ENCODE measurements at regions of chr9 and their contacts with region 1.

Region 1: DNA sequence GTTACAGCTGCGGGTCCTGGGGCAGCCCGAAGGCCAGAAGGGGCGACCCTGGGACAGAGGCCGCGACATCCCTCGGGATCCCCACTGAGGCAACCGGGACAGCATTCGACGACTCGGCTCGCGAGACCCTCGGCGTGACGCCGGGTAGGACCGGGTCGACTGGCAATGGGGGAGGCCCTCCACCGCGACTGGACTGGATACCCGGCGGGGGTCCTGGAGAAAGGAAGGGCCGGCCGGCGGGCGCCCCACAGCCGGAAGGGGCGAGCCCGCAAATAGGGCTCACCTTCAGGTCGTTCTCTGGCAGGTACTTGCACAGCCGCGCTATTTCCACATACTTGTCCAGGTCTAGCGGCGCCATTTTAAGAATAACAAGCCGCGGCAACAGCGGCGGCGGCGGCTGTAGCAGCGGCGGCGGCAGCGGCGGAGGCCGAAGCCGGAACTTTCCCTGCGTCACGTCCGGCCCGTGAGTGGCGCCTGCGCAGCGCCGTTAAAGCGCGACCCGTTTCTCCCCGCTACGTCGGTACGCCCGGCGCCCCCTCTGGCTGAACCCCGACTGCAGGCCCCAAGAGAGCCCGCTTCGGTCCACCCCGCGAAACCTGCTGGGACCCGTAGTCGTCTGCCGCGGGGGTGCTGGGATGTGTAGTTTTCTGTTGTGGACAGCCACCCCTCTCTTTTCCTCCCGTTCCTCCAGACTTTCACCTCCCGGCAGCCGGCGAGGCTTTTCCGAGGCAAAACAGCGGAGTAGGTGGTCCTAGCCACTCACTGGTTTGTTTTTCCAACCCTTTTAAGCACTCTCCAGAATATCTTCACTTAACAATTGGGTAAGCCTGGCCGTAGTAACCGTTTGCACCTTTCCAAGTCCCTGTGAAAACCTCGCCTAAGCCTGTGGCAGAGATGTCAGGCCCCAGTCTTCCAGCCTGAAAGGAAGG is at the start of gene PPP6C:
- DNase-seq: peak; percentile 95 to 98
- ATAC-seq: peak; percentile 96 to 99 (median 96)
- H3K4me3 ChIP-seq: peak within 1 kb of the TSS; percentile 99
- H3K4me3 Mint-ChIP-seq: peak within 1 kb of the TSS; percentile 94
- H3K27ac ChIP-seq: peak within 1 kb of the TSS; percentile 98
- H3K27ac Mint-ChIP-seq: peak within 1 kb of the TSS; percentile 91
- H3K4me1 ChIP-seq: peaks cover 28% of the 10 kb centered on the region
- H3K4me1 Mint-ChIP-seq: peaks cover 15 to 18% of the 10 kb centered on the region in 2 donors
- H3K27me3 ChIP-seq: no peaks in the 10 kb centered on the region
- H3K27me3 Mint-ChIP-seq: no peaks in the 10 kb centered on the region
- CTCF ChIP-seq: peak; percentile 62
- total RNA-seq, gene PPP6C: 31.1 to 37.4 (median 34.8) TPM

Region 2: DNA sequence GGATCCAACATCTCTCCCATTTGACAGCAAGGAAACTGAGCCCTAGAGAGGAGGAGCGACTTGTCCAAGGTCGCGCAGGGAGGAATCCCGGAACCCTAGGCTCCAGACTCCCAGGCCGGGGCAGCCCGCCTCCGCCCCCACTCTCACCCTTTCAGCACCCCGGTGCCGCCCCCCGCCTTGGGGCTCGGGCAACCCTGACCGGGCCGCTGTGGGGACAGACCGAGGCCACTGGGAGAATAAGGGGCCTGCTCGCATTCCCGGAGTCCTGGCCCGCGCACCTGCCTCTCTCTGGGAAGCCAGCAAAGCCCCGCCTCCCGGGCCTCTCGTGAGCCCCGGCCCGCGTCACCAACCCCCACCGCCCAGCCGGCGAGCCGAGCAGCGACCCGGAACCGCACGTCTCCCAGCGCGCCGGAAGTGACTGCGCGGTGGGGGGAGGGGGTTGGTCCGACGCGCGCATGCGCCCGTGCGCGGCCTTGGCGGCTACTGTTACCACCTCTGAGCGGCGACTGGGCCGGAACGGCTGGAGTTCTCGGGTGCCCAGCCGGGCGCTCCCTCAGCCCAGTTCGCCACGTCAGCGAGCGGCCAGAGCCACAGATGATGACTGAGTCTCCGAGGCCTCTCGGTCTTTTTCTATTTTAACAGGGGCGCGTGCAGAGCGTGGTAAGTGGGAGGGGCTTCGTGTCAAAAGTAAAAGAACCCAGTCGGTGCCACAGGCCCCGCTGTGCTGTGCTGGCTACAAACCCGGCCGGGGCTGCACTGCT is 248.8 kb before region 1 on chr9 and contains the start of gene GOLGA1:
- intact Hi-C with region 1: loop called (anchors 2 kb)
- DNase-seq: peak; percentile 92 to 97
- ATAC-seq: peak; percentile 85 to 97 (median 88)
- H3K4me3 ChIP-seq: peak within 1 kb of the TSS; percentile 98
- H3K4me3 Mint-ChIP-seq: peak within 1 kb of the TSS; percentile 97
- H3K27ac ChIP-seq: peak within 1 kb of the TSS; percentile 98
- H3K27ac Mint-ChIP-seq: peak within 1 kb of the TSS; percentile 91 to 95
- H3K4me1 ChIP-seq: peaks cover 14% of the 10 kb centered on the region
- H3K4me1 Mint-ChIP-seq: peaks cover 22 to 24% of the 10 kb centered on the region in 2 donors
- H3K27me3 ChIP-seq: no peaks in the 10 kb centered on the region
- H3K27me3 Mint-ChIP-seq: no peaks in the 10 kb centered on the region
- CTCF ChIP-seq: no peak
- total RNA-seq, gene GOLGA1: 21.5 to 32.4 (median 27.0) TPM

Region 3: DNA sequence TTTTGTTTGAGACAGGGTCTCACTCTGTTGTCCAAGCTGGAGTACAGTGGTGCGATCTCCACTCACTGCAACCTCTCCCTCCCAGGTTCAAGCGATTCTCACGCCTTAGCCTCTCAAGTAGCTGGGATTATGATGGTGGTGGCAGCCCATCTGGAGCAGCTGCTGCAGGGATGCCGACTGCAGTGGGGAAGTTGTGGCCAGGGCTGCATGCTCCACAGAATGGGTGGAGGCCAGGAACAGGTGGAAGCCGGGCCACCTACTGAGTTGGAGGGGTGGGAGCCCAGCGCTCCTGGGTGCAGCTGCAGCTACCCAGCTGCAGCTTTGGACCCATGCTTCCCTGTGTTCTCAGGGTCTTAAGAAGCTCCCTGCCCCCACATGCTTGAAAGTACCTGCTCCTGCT is 146.0 kb before region 1 on chr9:
- intact Hi-C with region 1: no loop called
- DNase-seq: no peak
- ATAC-seq: no peak
- H3K4me3 ChIP-seq: no peak overlapping the region
- H3K4me3 Mint-ChIP-seq: no peak overlapping the region
- H3K27ac ChIP-seq: no peak overlapping the region
- H3K27ac Mint-ChIP-seq: no peak overlapping the region
- H3K4me1 ChIP-seq: no peaks in the 10 kb centered on the region
- H3K4me1 Mint-ChIP-seq: no peaks in the 10 kb centered on the region
- H3K27me3 ChIP-seq: no peaks in the 10 kb centered on the region
- H3K27me3 Mint-ChIP-seq: no peaks in the 10 kb centered on the region
- CTCF ChIP-seq: no peak

Region 4: DNA sequence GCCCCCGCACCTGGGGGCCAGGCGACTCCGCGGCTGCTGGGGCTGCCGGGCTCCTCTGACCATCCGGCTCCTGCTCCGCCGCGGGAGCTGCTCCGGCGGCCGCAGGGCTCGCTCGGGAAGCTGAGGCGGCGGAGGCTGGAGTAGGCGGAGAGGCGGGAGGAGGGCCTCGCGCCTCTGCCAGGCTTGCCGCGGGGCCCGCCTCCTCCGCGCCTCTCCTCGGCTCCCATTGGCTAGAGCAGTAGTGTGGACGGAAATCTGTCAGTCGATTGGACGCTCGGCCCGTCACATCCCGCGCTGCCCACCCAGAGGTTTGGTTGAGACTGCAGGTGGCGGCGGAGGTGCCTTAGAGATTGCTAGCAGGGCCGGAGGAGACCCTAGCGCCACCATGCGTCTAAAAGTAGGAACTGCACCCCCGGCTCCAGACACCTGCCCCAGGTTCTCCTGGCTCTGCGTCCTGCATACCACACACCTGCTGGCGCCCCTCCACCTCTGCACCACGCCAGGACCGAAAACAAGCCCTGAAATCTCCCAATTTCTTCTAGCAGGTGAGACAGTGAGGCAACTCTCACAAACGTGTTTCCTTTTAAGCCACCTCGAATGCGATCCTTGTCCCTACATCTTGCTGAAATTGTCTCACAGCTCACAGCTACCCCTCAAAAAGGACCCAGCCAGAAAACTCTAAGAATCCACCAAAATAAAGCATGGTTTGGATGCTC is 46.1 kb before region 1 on chr9 and contains the start of gene SCAI:
- intact Hi-C with region 1: loop called (anchors 5 kb)
- DNase-seq: peak; percentile 95 to 99
- ATAC-seq: peak; percentile 98 to 100 (median 99)
- H3K4me3 ChIP-seq: peak within 1 kb of the TSS; percentile 33
- H3K4me3 Mint-ChIP-seq: peak within 1 kb of the TSS; percentile 98
- H3K27ac ChIP-seq: no peak within 1 kb of the TSS
- H3K27ac Mint-ChIP-seq: peak within 1 kb of the TSS; percentile 82 to 91
- H3K4me1 ChIP-seq: peaks cover 9% of the 10 kb centered on the region
- H3K4me1 Mint-ChIP-seq: peaks cover 21 to 23% of the 10 kb centered on the region in 2 donors
- H3K27me3 ChIP-seq: no peaks in the 10 kb centered on the region
- H3K27me3 Mint-ChIP-seq: no peaks in the 10 kb centered on the region
- CTCF ChIP-seq: peak; percentile 99
- total RNA-seq, gene SCAI: 8.5 to 13.0 (median 10.7) TPM

Region 5: GRCh38 chr9:125200210-125201047 is 10.8 kb after region 1 on chr9 and contains the start of gene RABEPK:
- intact Hi-C with region 1: loop called (anchors 1 kb)
- DNase-seq: peak; percentile 93 to 94
- ATAC-seq: peak; percentile 98 to 99 (median 98)
- H3K4me3 ChIP-seq: peak within 1 kb of the TSS; percentile 92
- H3K4me3 Mint-ChIP-seq: peak within 1 kb of the TSS; percentile 88
- H3K27ac ChIP-seq: peak within 1 kb of the TSS; percentile 83
- H3K27ac Mint-ChIP-seq: peak within 1 kb of the TSS; percentile 78 to 84
- H3K4me1 ChIP-seq: peaks cover 16% of the 10 kb centered on the region
- H3K4me1 Mint-ChIP-seq: peaks cover 8 to 12% of the 10 kb centered on the region in 2 donors
- H3K27me3 ChIP-seq: no peaks in the 10 kb centered on the region
- H3K27me3 Mint-ChIP-seq: peaks cover 0 to 2% of the 10 kb centered on the region in 2 donors
- CTCF ChIP-seq: no peak
- total RNA-seq, gene RABEPK: 10.6 to 13.1 (median 11.8) TPM

Region 6: DNA sequence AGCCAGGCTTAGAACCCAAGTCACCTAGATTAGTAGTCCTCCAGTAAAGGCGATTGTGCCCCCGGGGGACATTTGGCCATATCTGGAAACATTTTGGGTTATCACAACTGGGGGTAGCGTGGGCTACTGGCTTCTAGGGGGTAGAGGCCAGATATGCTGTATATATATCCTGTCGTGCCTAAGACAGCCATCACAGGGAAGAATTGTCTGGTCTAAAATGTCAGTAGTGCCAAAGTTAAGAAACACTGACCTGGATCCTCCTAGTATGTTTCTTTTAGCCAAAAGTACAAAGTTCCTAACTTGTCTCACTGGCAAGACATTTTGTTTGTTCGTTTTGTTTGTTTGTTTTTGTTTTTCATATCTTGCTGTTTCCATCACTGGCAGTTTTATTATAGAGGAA is 24.6 kb after region 1 on chr9:
- intact Hi-C with region 1: no loop called
- DNase-seq: no peak
- ATAC-seq: no peak
- H3K4me3 ChIP-seq: no peak overlapping the region
- H3K4me3 Mint-ChIP-seq: no peak overlapping the region
- H3K27ac ChIP-seq: no peak overlapping the region
- H3K27ac Mint-ChIP-seq: no peak overlapping the region
- H3K4me1 ChIP-seq: no peaks in the 10 kb centered on the region
- H3K4me1 Mint-ChIP-seq: no peaks in the 10 kb centered on the region
- H3K27me3 ChIP-seq: no peaks in the 10 kb centered on the region
- H3K27me3 Mint-ChIP-seq: no peaks in the 10 kb centered on the region
- CTCF ChIP-seq: no peak

Region 7: DNA sequence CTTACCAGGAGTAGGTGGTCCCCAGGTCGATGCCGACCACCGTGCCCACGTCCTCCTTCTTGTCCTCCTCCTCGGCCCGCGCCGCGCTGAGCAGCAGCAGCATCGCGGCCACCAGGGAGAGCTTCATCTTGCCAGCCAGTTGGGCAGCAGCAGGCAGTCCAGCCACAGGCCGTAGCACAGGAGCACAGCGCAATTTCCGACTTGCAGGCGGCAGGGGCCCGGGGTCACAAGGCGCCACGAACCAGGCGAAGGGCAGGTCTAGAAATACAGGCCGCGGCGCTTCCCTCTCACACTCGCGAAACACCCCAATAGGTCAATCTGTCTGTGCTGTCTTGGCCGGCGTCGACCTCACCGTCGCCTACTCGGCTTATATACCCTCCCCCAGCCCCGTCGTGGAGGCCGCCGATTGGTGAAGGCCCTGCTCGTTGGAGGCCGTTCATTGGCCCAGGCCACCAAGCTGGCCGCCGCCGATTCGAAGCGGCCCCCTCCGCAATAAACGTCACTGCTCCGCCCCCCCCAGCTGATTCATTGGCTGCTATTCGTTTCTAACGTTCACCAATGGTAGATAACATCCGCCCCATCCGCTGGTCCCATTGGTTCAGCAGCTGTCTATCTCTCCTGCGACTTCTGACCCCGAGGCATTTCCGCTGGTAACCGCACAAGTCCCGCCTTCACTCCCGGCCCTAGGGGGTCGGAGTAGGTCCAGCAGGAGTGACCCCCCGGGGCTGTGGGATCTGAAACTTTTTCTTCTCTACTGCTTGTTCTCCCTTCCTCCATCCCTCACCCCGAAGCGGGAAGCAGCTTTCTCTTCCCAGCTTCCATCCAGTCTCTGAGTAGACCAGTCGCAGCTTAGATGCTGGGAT is 51.6 kb after region 1 on chr9 and contains the start of gene HSPA5:
- intact Hi-C with region 1: loop called (anchors 1 kb)
- DNase-seq: peak; percentile 99
- ATAC-seq: peak; percentile 85 to 95 (median 86)
- H3K4me3 ChIP-seq: peak within 1 kb of the TSS; percentile 97
- H3K4me3 Mint-ChIP-seq: peak within 1 kb of the TSS; percentile 97
- H3K27ac ChIP-seq: peak within 1 kb of the TSS; percentile 100
- H3K27ac Mint-ChIP-seq: peak within 1 kb of the TSS; percentile 99 to 100
- H3K4me1 ChIP-seq: peaks cover 35% of the 10 kb centered on the region
- H3K4me1 Mint-ChIP-seq: peaks cover 53 to 55% of the 10 kb centered on the region in 2 donors
- H3K27me3 ChIP-seq: no peaks in the 10 kb centered on the region
- H3K27me3 Mint-ChIP-seq: peaks cover 0 to 2% of the 10 kb centered on the region in 2 donors
- CTCF ChIP-seq: no peak
- total RNA-seq, gene HSPA5: 222 to 281 (median 275) TPM

Region 8: DNA sequence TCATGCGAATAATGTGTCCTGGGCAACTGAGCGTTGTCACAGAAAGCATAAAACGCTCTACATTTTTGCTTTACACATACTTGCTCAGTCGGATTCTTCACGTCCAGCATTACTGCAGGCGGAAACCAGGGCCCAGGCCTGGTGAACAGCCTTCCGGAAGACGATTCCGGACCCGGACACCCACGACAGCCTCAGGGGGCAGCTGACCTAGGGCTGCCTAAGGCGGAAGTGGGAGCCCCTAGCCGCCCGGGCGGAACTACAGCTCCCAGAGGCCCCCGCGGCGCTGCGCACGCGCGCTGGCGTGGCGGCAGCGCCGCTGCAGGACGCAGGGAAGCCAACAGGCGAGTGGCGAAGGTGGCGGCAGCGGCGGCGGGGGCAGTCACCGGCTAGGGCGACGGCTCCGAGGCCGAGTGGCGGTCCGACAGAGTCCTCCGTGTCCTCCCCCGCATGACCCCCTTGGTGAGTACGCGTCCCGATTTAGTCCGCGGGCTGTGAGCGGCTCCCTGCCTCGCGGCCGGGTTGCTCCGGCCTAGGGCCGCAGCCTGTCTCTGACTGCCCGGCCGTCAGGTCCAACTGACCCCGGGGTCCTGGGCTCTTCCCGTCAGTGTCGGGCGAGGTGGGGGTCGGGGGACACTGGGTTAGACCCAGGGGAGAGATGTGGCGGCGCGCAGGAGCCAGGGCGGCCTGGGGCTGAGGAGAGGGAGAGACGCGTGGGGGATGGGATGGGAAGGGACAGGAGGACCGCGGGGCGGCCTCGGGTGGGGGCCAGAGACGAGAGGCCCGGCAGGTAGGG is 72.1 kb after region 1 on chr9 and contains the start of gene GAPVD1:
- intact Hi-C with region 1: loop called (anchors 1 kb)
- DNase-seq: peak; percentile 89 to 94
- ATAC-seq: peak; percentile 96 to 99 (median 98)
- H3K4me3 ChIP-seq: peak within 1 kb of the TSS; percentile 91
- H3K4me3 Mint-ChIP-seq: peak within 1 kb of the TSS; percentile 100
- H3K27ac ChIP-seq: peak within 1 kb of the TSS; percentile 95
- H3K27ac Mint-ChIP-seq: peak within 1 kb of the TSS; percentile 90 to 97
- H3K4me1 ChIP-seq: peaks cover 14% of the 10 kb centered on the region
- H3K4me1 Mint-ChIP-seq: peaks cover 35 to 46% of the 10 kb centered on the region in 2 donors
- H3K27me3 ChIP-seq: no peaks in the 10 kb centered on the region
- H3K27me3 Mint-ChIP-seq: no peaks in the 10 kb centered on the region
- CTCF ChIP-seq: peak; percentile 23
- total RNA-seq, gene GAPVD1: 66.1 to 83.2 (median 68.8) TPM

Measured in natural killer cell (primary cell).